ENCODE measurements at regions of chr6 and their contacts with region 1.

Region 1: DNA sequence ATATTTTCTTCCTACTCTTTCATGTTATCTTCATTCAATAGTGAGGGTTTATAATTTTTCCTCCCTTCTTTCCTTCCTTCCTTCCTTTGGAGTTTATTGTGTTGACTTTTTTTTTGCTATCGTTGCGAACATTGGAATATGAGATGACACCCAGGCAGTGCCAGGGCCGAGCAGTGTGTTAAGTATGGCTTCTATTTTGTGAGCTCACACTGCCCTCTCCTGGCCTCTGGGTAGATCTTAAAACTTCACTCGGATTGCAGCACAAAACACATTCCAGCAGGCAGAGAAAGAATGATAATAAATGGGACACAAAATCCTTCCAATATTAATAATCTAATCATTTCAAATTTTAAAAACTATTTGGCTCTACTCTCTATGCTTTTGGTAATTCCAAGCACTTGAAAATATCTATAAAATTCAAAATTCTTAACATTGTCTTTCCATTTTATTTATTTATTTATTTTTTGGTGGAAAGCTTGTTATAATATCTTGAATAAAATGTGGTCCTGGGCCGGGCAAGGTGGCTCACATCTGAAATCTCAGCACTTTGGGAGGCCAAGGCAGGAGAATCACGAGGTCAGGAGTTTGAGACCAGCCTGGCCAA is 147.4 kb upstream of the OLIG3 start:
- DNase-seq: peak; percentile 78
- ATAC-seq: peak; percentile 73
- H3K4me3 ChIP-seq: no peak overlapping the region
- H3K4me3 Mint-ChIP-seq: no peak overlapping the region
- H3K27ac ChIP-seq: no peak overlapping the region
- H3K27ac Mint-ChIP-seq: no peak overlapping the region
- H3K4me1 ChIP-seq: peaks cover 0 to 8% of the 10 kb centered on the region in 2 donors
- H3K4me1 Mint-ChIP-seq: peaks cover 13% of the 10 kb centered on the region
- H3K27me3 ChIP-seq: no peaks in the 10 kb centered on the region
- H3K27me3 Mint-ChIP-seq: peaks cover 9% of the 10 kb centered on the region
- CTCF ChIP-seq: peak; percentile 78

Region 2: GRCh38 chr6:136582711-136583471 is 1058.7 kb before region 1 on chr6:
- CTCF ChIA-PET with region 1: no interaction called
- POLR2A ChIA-PET with region 1: no interaction called
- intact Hi-C with region 1: loop called (anchors 5 kb)
- DNase-seq: peak; percentile 18
- ATAC-seq: no peak
- H3K4me3 ChIP-seq: no peak overlapping the region
- H3K4me3 Mint-ChIP-seq: no peak overlapping the region
- H3K27ac ChIP-seq: no peak overlapping the region
- H3K27ac Mint-ChIP-seq: no peak overlapping the region
- H3K4me1 ChIP-seq: no peaks in the 10 kb centered on the region
- H3K4me1 Mint-ChIP-seq: no peaks in the 10 kb centered on the region
- H3K27me3 ChIP-seq: no peaks in the 10 kb centered on the region
- H3K27me3 Mint-ChIP-seq: no peaks in the 10 kb centered on the region
- CTCF ChIP-seq: peak; percentile 64

Region 3: DNA sequence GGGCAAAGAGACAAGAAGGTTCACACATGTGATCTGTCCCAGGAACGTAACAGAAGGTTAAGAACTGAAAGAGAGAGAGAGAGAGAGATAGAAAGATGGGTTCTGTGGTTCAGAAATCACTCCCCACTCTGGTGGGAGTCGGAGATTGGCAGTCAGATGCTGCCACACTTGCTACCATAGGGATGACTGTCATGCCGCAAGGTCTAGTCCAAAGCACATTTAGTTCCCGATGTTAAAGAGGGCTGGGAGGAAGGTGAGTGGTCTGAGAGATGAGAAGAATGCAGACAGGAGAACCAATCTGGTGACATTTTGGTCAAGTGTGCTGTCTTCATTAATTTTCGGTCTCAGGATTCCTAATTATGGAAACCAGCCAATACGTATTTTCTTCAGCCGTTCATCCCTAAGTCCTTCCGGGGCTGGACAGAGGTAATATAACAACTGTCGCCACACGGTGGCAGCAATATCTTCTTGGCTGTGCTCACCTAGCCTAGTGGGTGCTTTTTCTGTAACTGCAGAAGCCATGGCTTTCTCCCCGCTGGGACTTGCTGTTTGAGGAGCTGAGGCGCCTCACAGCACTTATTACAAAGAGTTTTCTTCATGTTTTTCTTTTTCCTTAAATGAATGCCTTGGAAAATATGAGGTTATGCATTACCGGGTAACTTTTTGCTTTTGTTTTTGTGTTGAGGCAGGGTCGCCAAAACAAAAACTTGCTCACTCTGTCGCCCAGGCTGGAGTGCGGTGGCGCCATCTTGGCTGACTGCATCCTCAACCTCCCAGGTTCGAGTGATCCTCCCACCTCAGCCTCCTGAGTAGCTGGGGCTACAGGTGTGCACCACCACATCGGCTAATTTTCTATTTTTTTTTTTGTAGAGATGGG is 673.5 kb before region 1 on chr6:
- CTCF ChIA-PET with region 1: interaction called, 17 read pairs
- POLR2A ChIA-PET with region 1: no interaction called
- intact Hi-C with region 1: loop called (anchors 1 kb)
- DNase-seq: peak; percentile 77
- ATAC-seq: peak; percentile 85
- H3K4me3 ChIP-seq: no peak overlapping the region
- H3K4me3 Mint-ChIP-seq: no peak overlapping the region
- H3K27ac ChIP-seq: no peak overlapping the region
- H3K27ac Mint-ChIP-seq: no peak overlapping the region
- H3K4me1 ChIP-seq: peaks cover 3% of the 10 kb centered on the region in 2 donors
- H3K4me1 Mint-ChIP-seq: peaks cover 7% of the 10 kb centered on the region
- H3K27me3 ChIP-seq: peaks cover 0 to 9% (median 0%) of the 10 kb centered on the region in 4 experiments
- H3K27me3 Mint-ChIP-seq: peaks cover 24% of the 10 kb centered on the region
- CTCF ChIP-seq: peak; percentile 82

Region 4: GRCh38 chr6:137202078-137202477 is 439.5 kb before region 1 on chr6:
- CTCF ChIA-PET with region 1: no interaction called
- POLR2A ChIA-PET with region 1: no interaction called
- intact Hi-C with region 1: loop called (anchors 5 kb)
- DNase-seq: peak; percentile 55
- ATAC-seq: peak; percentile 74
- H3K4me3 ChIP-seq: no peak overlapping the region
- H3K4me3 Mint-ChIP-seq: no peak overlapping the region
- H3K27ac ChIP-seq: no peak overlapping the region
- H3K27ac Mint-ChIP-seq: peak overlapping the region; percentile 61
- H3K4me1 ChIP-seq: peaks cover 10 to 11% of the 10 kb centered on the region in 2 donors
- H3K4me1 Mint-ChIP-seq: peaks cover 31% of the 10 kb centered on the region
- H3K27me3 ChIP-seq: no peaks in the 10 kb centered on the region
- H3K27me3 Mint-ChIP-seq: no peaks in the 10 kb centered on the region
- CTCF ChIP-seq: peak; percentile 67

Region 5: DNA sequence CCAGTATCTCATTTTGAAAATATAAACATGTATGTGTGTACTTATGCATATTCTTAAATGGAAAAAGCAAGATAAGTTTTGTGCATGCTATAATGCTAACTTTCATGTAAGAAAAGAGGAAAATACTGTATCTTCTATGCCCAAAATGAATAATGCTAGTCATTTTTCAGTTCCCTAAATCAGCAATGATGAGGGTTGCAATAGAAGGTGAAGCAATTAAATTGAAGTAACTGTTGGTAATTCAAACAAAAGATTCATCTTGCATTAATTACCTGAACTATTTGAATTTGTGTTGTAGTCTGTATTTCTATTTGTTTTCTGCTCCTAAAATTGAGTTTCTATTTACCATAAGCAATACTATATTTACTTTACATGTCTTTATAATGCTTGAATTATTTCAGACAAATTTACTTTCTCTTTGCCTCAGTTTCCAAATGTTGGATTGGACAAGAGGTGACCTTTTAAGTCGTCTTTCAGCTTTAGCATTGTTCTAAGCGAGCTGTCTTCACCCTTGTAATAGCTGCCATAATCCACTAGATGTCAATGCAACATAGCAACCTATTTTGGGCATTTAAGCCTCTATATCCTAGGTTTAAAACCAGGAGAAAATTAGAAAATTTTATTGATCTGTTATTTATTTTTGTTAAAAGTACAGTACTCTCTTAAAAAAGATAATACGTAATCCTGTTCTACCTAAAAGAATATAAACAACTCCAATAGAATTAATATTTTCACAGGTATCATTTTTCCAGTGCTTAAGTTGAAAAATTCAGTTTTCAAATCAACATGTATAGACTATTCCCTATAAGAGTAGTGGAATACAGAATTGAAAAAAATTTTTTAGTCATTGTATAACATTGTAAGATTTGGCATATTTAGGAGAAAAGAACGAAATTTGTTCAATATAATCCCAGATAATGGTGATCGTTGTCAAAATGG is 370.1 kb before region 1 on chr6:
- CTCF ChIA-PET with region 1: interaction called, 11 read pairs
- POLR2A ChIA-PET with region 1: no interaction called
- intact Hi-C with region 1: no loop called
- DNase-seq: peak; percentile 63
- ATAC-seq: peak; percentile 72
- H3K4me3 ChIP-seq: no peak overlapping the region
- H3K4me3 Mint-ChIP-seq: no peak overlapping the region
- H3K27ac ChIP-seq: no peak overlapping the region
- H3K27ac Mint-ChIP-seq: no peak overlapping the region
- H3K4me1 ChIP-seq: peaks cover 5 to 14% of the 10 kb centered on the region in 2 donors
- H3K4me1 Mint-ChIP-seq: peaks cover 15% of the 10 kb centered on the region
- H3K27me3 ChIP-seq: no peaks in the 10 kb centered on the region
- H3K27me3 Mint-ChIP-seq: no peaks in the 10 kb centered on the region
- CTCF ChIP-seq: peak; percentile 93

Region 6: GRCh38 chr6:137341681-137342195 is 299.8 kb before region 1 on chr6:
- CTCF ChIA-PET with region 1: interaction called, 8 read pairs
- POLR2A ChIA-PET with region 1: no interaction called
- intact Hi-C with region 1: loop called (anchors 1 kb)
- DNase-seq: peak; percentile 44
- ATAC-seq: no peak
- H3K4me3 ChIP-seq: peak overlapping the region in 1 of 5 experiments; percentile 62
- H3K4me3 Mint-ChIP-seq: peak overlapping the region; percentile 64
- H3K27ac ChIP-seq: no peak overlapping the region
- H3K27ac Mint-ChIP-seq: no peak overlapping the region
- H3K4me1 ChIP-seq: peaks cover 7 to 9% of the 10 kb centered on the region in 2 donors
- H3K4me1 Mint-ChIP-seq: peaks cover 15% of the 10 kb centered on the region
- H3K27me3 ChIP-seq: no peaks in the 10 kb centered on the region
- H3K27me3 Mint-ChIP-seq: peaks cover 12% of the 10 kb centered on the region
- CTCF ChIP-seq: peak; percentile 19

Region 7: DNA sequence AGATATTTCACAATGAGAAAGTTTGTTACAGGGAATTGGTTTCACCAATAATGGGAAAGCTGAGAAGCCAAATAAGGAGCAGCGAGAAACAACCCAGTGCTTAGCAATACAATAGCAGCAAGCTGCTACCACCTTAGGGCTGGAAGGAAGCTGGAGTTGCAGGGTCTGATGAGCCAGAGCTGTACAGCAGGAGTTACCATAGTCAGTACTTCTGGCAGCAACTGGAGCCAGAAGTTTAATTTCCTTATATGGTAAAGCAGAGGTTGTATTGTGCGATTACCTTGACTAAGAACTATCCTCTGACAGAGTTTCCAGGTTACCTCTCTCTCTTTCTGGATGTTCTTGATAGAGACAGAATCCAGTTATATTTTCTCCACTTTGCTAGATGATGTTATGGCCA is 10.3 kb before region 1 on chr6:
- CTCF ChIA-PET with region 1: interaction called, 10 read pairs
- POLR2A ChIA-PET with region 1: no interaction called
- intact Hi-C with region 1: no loop called
- DNase-seq: no peak
- ATAC-seq: no peak
- H3K4me3 ChIP-seq: no peak overlapping the region
- H3K4me3 Mint-ChIP-seq: no peak overlapping the region
- H3K27ac ChIP-seq: no peak overlapping the region
- H3K27ac Mint-ChIP-seq: no peak overlapping the region
- H3K4me1 ChIP-seq: no peaks in the 10 kb centered on the region
- H3K4me1 Mint-ChIP-seq: no peaks in the 10 kb centered on the region
- H3K27me3 ChIP-seq: peaks cover 0 to 4% (median 2%) of the 10 kb centered on the region in 4 experiments
- H3K27me3 Mint-ChIP-seq: peaks cover 14% of the 10 kb centered on the region
- CTCF ChIP-seq: no peak

Measured in B cell (primary cell).